ENCODE measurements at regions of chr11 and their contacts with region 1.

Region 1: DNA sequence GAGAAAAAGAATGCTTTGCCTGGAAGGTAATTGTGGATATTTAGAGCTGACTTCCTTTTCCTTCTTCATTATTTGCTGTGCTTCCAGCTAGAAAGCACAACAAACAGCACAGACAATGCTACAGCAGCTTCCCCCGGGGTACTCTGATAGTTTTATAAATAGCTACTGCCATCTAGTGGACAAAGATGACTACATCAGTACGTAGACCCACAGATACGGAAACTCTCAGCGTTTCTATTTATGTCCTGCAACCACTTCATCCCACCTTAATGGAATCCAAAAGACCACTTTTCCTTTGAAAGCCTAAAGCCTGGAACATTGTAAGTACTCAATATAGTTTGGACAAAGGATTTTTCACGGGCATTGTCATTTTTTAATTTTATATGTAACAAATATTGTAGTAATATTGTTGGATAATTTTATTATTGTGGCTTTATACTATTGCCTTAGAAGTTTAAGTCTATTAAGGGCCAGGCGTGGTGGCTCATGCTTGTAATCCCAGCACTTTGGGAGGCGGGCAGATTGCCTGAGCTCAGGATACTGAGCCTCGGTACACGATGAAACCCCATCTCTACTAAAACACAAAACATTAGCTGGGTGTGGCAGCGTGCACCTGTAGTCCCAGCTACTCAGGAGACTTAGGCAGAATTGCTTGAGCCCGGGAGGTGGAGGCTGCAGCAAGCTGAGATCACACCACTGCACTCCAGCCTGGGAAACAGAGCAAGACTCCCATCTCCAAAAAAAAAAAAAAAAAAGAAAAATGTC is 7.5 kb downstream of the HSPA8 start:
- DNase-seq: peak; percentile 17
- H3K4me3 Mint-ChIP-seq: no peak overlapping the region
- H3K27ac Mint-ChIP-seq: peak overlapping the region; percentile 70
- H3K4me1 Mint-ChIP-seq: peaks cover 37% of the 10 kb centered on the region
- H3K27me3 Mint-ChIP-seq: no peaks in the 10 kb centered on the region

Region 2: GRCh38 chr11:122646549-122647340 is 407.7 kb before region 1 on chr11:
- CTCF ChIA-PET with region 1: no interaction called
- intact Hi-C with region 1: loop called (anchors 1 kb)
- DNase-seq: no peak
- H3K4me3 Mint-ChIP-seq: no peak overlapping the region
- H3K27ac Mint-ChIP-seq: no peak overlapping the region
- H3K4me1 Mint-ChIP-seq: no peaks in the 10 kb centered on the region
- H3K27me3 Mint-ChIP-seq: no peaks in the 10 kb centered on the region

Region 3: DNA sequence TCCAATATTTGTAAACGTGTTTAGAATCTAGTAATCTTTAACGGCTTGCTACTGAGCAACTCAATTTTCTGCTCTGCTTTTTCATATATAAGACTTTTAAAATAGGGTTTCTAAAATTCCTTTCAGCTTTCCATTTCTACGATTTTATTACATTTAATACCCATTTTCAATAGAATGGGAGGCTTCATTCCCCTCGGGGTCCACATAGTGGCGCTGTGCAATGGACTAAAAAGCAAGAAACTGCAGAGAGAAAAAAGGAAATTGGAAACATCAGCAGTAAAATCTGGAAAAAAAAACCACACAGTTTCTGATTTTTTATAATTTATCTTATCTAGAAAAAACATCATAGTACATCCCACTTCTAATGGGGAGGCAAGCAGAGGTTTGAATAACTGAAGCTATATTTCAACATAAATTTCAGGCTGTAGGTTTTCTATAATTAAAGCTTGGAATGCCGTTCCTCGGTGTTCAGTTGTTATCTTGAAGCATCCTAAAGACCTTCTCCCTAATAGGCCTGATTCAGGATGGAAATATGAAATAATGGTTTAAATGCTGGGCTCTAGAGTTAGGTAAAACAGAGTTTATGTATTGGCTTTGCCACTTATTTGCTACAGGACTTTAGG is 190.7 kb before region 1 on chr11:
- CTCF ChIA-PET with region 1: interaction called, 13 read pairs
- intact Hi-C with region 1: loop called (anchors 1 kb)
- DNase-seq: peak; percentile 73
- H3K4me3 Mint-ChIP-seq: no peak overlapping the region
- H3K27ac Mint-ChIP-seq: no peak overlapping the region
- H3K4me1 Mint-ChIP-seq: no peaks in the 10 kb centered on the region
- H3K27me3 Mint-ChIP-seq: no peaks in the 10 kb centered on the region

Region 4: GRCh38 chr11:122910775-122911174 is 143.7 kb before region 1 on chr11:
- CTCF ChIA-PET with region 1: interaction called, 3 read pairs
- intact Hi-C with region 1: loop called (anchors 1 kb)
- DNase-seq: peak; percentile 46
- H3K4me3 Mint-ChIP-seq: no peak overlapping the region
- H3K27ac Mint-ChIP-seq: no peak overlapping the region
- H3K4me1 Mint-ChIP-seq: no peaks in the 10 kb centered on the region
- H3K27me3 Mint-ChIP-seq: no peaks in the 10 kb centered on the region

Region 5: GRCh38 chr11:123166071-123166559 is 111.6 kb after region 1 on chr11:
- CTCF ChIA-PET with region 1: no interaction called
- intact Hi-C with region 1: no loop called
- DNase-seq: peak; percentile 46
- H3K4me3 Mint-ChIP-seq: no peak overlapping the region
- H3K27ac Mint-ChIP-seq: no peak overlapping the region
- H3K4me1 Mint-ChIP-seq: no peaks in the 10 kb centered on the region
- H3K27me3 Mint-ChIP-seq: no peaks in the 10 kb centered on the region

Measured in activated naive CD4-positive, alpha-beta T cell treated with anti-CD3 and anti-CD28 coated beads for 36 hours (primary cell).